Activated naive CD4-positive, alpha-beta T cell treated with anti-CD3 and anti-CD28 coated beads for 36 hours (primary cell): ENCODE measurements at regions of chr1 and their contacts with region 1.

Region 1: DNA sequence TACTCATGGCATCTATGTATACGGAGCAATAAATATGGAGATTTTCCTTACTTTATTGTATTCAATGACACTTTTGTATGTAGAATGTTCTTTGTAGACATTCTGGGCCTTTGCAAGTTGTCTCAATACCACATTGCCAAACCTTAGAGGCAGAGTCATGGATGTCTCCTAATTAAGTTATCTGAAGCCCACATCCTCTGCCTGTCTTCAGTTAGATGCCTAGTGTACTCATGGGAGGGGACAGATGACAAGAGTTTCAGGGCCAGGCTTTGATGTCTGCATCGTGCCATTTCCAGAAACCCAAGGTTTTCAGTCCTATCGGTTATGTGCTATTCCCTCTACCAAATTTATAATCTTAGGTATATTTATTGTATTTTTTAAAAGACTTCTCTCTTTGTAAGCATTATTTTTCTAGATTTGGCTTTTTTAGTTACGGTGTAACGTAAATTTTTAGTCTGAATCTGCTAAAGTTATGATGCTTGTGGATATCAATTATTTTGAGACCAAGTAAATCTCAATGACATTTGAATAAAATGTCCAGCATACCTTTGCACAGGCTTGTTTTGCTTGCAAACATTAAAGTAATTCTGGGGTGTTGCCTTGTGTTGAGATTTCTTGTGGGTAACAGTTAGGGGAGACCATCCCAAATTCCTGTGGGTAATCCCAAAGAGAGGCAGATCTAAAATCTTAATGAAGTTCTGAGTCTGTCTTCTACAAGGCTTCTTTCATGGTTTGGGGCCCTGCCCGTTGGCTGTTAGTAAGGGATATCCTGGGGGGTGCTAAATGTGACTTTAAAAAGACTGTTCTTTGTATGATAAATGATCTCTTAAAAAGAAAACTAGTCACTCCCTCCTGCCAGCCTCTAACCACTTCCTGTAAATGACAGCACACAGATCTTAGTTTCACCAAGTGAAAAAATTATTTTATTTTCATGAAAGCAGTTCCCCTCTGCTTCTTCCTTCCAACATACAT is 8.0 kb upstream of the MACF1 start:
- DNase-seq: peak; percentile 81
- H3K4me3 Mint-ChIP-seq: peak overlapping the region; percentile 53
- H3K27ac Mint-ChIP-seq: peak overlapping the region; percentile 97
- H3K4me1 Mint-ChIP-seq: peaks cover 81% of the 10 kb centered on the region
- H3K27me3 Mint-ChIP-seq: no peaks in the 10 kb centered on the region

Region 2: DNA sequence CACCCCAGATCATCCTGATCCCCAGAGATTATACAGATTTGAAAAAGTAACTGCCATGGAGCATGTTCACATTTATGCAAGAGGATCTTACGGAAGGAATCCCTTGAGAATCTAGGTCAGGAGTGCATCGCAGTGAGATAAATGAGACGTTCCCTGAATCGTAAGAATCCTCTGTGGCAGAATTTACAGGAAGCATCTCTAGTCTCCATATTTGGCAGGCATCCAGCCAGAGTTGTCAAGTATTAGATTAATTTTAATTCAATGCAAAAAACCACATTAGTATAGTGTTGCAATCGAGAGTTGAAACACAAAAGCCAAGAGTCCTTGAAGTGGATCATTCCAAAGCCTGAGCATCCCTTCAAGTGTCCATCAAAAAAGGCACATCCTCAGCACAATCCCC is 437.7 kb before region 1 on chr1:
- CTCF ChIA-PET with region 1: no interaction called
- intact Hi-C with region 1: no loop called
- DNase-seq: no peak
- H3K4me3 Mint-ChIP-seq: no peak overlapping the region
- H3K27ac Mint-ChIP-seq: no peak overlapping the region
- H3K4me1 Mint-ChIP-seq: no peaks in the 10 kb centered on the region
- H3K27me3 Mint-ChIP-seq: peaks cover 7% of the 10 kb centered on the region

Region 3: DNA sequence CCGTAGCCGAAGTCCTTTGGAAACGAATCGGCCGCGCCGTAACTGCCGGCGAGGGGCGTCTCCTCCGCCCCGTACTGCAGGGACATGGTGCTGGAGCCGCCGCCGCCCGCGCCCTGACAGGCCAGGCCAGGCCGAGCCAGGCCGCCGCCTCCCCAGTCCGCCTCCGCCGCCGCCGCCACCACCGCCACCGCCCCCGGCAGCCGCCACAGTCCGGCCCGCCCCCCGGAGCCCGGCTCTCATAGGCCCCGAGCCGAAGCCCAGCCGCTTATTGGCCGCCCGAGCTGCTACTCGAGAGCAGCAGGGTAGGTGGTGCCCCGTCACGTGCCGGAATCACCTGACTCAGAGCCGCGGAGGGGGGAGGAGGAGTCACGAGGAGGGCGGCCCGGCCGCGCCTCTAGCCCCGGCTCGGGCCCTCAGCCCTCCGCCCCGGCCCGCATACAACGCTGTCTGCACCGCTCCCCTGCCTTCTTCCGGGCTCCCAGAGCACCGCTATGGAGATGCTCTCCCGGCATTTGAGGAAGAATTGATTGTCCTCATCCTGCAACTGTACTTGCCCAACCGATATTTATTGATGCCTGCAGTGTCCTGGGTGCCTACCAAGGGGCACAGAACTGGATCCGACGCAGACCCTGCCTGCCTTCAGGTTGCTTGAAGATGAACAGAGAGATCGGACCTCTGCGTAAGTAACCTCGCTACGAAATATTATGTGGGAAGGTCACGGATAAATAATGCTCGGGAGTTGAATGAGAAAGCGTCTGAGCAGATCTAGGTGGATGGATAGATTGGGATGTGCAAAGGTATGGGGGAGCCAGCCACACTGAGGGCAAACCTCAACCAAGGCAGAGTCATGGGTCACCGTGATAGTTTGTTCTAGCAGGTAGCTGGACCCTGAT is 336.7 kb before region 1 on chr1 and contains the start of gene RRAGC:
- CTCF ChIA-PET with region 1: no interaction called
- intact Hi-C with region 1: loop called (anchors 2 kb)
- DNase-seq: peak; percentile 99
- H3K4me3 Mint-ChIP-seq: peak within 1 kb of the TSS; percentile 86
- H3K27ac Mint-ChIP-seq: peak within 1 kb of the TSS; percentile 91
- H3K4me1 Mint-ChIP-seq: peaks cover 51% of the 10 kb centered on the region
- H3K27me3 Mint-ChIP-seq: no peaks in the 10 kb centered on the region
- total RNA-seq, gene RRAGC: 22.3 to 23.3 TPM

Region 4: GRCh38 chr1:39105061-39105840 is 91.3 kb before region 1 on chr1:
- CTCF ChIA-PET with region 1: interaction called, 36 read pairs
- intact Hi-C with region 1: loop called (anchors 1 kb)
- DNase-seq: peak; percentile 51
- H3K4me3 Mint-ChIP-seq: peak overlapping the region; percentile 78
- H3K27ac Mint-ChIP-seq: no peak overlapping the region
- H3K4me1 Mint-ChIP-seq: peaks cover 42% of the 10 kb centered on the region
- H3K27me3 Mint-ChIP-seq: peaks cover 8% of the 10 kb centered on the region

Region 5: DNA sequence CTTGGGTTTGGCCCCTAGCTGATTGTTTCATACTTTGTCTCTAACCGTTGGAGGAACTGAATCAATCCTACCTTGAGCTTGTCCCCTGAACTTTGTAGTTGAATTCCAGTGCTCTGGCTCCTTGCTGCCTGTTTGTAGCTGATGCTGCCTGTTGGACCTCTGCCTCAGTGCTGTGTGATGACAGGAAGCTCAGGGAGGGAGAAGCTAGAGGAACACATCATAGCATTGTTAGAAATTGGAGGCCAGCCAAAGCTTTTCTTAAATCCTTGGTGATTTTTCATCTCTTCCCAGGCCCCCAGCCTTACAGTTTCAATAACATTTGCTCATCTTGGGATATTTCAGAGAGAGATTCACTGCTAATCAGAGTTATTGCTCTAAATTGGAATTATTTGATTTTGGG is 41.9 kb after region 1 on chr1:
- CTCF ChIA-PET with region 1: interaction called, 14 read pairs
- intact Hi-C with region 1: no loop called
- DNase-seq: no peak
- H3K4me3 Mint-ChIP-seq: no peak overlapping the region
- H3K27ac Mint-ChIP-seq: peak overlapping the region; percentile 17
- H3K4me1 Mint-ChIP-seq: peaks cover 52% of the 10 kb centered on the region
- H3K27me3 Mint-ChIP-seq: no peaks in the 10 kb centered on the region

Region 6: GRCh38 chr1:39258146-39258924 is 61.8 kb after region 1 on chr1:
- CTCF ChIA-PET with region 1: interaction called, 257 read pairs
- intact Hi-C with region 1: loop called (anchors 1 kb)
- DNase-seq: peak; percentile 80
- H3K4me3 Mint-ChIP-seq: no peak overlapping the region
- H3K27ac Mint-ChIP-seq: peak overlapping the region; percentile 50
- H3K4me1 Mint-ChIP-seq: peaks cover 33% of the 10 kb centered on the region
- H3K27me3 Mint-ChIP-seq: no peaks in the 10 kb centered on the region

Region 7: GRCh38 chr1:39408641-39409054 is 212.1 kb after region 1 on chr1:
- CTCF ChIA-PET with region 1: interaction called, 25 read pairs
- intact Hi-C with region 1: loop called (anchors 1 kb)
- DNase-seq: peak; percentile 82
- H3K4me3 Mint-ChIP-seq: peak overlapping the region; percentile 81
- H3K27ac Mint-ChIP-seq: no peak overlapping the region
- H3K4me1 Mint-ChIP-seq: peaks cover 60% of the 10 kb centered on the region
- H3K27me3 Mint-ChIP-seq: no peaks in the 10 kb centered on the region

Region 8: GRCh38 chr1:39623053-39623452 is 426.5 kb after region 1 on chr1:
- CTCF ChIA-PET with region 1: no interaction called
- intact Hi-C with region 1: no loop called
- DNase-seq: no peak
- H3K4me3 Mint-ChIP-seq: no peak overlapping the region
- H3K27ac Mint-ChIP-seq: no peak overlapping the region
- H3K4me1 Mint-ChIP-seq: no peaks in the 10 kb centered on the region
- H3K27me3 Mint-ChIP-seq: no peaks in the 10 kb centered on the region

Region 9: DNA sequence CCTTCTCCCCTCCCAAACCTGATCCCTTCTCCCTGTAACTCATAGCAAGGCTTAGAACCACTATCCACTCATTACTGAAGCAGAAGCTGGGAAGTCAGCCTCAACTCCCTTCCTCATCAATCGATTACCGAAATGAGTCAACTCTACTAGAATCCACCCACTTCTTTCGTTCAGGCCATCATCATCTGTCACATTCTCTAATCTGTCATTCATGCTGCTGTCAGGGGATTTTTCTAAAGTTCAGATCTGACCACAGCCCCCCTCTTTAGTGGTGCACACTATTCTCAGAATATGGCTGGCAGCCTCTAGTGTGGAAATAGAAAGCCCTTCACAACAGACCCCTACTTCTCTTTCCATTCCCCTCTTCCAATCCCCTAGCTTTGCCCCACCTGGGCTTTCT is 470.2 kb after region 1 on chr1:
- CTCF ChIA-PET with region 1: no interaction called
- intact Hi-C with region 1: loop called (anchors 2 kb)
- DNase-seq: peak; percentile 77
- H3K4me3 Mint-ChIP-seq: no peak overlapping the region
- H3K27ac Mint-ChIP-seq: peak overlapping the region; percentile 42
- H3K4me1 Mint-ChIP-seq: peaks cover 23% of the 10 kb centered on the region
- H3K27me3 Mint-ChIP-seq: peaks cover 32% of the 10 kb centered on the region